ENCODE measurements at regions of chr15 and their contacts with region 1.

Region 1: DNA sequence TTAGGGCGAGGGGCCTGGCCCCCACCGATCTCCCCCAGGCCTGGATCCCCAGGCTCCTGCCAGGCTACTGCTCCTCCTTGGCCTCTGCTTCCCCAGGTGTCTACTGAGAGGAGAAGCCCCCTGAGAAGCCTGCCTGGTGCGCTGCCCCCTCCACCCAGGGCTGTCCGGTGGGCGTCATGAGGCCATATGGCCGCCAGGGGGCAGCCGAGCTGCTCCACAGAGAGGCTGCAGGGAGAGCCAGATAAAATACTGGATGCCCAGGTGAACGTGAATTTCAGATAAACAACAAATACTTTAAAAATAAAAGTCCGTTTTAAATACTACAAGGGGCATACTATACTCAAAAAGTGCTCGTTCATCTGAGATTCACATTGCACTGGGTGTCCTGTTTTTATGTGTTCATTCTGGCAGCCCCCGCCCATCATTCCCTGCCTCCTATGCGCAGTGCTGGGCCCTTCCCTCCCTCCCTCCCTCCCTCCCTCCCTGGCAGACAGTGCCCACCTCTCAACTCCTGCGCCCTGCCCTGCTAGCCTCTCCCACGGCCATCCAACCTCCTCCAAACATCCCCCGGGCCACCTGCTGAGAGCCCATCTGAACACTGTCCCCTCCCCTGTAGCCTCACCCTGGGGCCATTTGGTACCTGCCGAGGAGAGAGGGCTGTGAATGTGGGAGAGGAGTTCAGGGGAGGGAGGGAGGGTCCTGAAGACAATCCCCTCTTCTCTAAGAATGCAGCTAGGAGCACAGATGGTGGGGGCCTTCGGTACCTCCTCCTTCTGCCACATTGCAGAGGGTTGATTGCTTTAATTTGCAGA is 29.6 kb downstream of the PSTPIP1 start:
- DNase-seq: peak in 1 of 2 donors; percentile 82
- H3K4me3 ChIP-seq: no peak overlapping the region
- H3K27ac ChIP-seq: no peak overlapping the region
- H3K4me1 ChIP-seq: no peaks in the 10 kb centered on the region
- H3K27me3 ChIP-seq: no peaks in the 10 kb centered on the region
- CTCF ChIP-seq: peak; percentile 90 to 97 (median 97)

Region 2: GRCh38 chr15:76939715-76940114 is 84.8 kb before region 1 on chr15:
- intact Hi-C with region 1: loop called (anchors 5 kb)
- DNase-seq: no peak
- H3K4me3 ChIP-seq: no peak overlapping the region
- H3K27ac ChIP-seq: no peak overlapping the region
- H3K4me1 ChIP-seq: peaks cover 0 to 5% of the 10 kb centered on the region in 2 donors
- H3K27me3 ChIP-seq: no peaks in the 10 kb centered on the region
- CTCF ChIP-seq: no peak